Naive thymus-derived CD4-positive, alpha-beta T cell (primary cell): ENCODE measurements at regions of chr14 and their contacts with region 1.

Region 1: DNA sequence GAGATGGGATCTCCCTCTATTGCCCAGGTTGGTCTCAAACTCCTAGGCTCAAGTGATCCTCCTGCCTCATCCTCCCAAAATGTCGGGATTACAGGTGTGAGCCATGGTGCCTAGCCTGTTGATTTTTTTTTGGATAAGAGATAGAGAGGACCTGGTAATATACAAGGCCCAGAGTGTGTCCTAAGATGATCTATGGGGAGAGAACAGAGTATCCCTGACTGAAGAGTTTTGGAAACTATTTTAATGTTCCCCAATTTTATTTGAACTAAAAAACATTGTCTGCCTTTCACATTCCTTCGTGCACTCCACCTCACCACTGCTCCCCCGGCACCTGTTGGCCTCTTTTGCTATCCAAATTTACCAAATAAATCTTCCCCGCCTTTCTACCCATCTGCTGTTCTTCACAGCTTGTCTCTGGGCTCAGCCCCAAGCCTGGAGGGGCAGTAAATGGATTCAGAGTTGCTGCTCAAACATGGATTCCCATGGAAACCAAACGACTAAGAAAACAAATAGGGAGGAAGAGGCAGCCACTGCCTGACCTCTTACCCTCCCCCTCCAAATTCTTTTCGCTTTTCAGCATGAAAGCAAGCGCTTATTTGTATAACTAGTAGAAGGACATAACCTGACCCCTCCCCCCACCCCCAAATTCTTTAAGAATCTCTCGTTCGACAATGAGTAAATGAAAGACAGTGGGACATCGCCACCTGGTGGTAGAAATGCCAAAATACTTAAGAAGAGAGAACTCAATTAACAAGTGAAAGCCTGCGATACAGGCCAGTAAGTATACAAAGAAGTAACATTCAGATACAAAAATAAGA is 22.6 kb downstream of the OR10G3 start:
- DNase-seq: peak; percentile 25 to 81 (median 74)
- ATAC-seq: peak; percentile 84
- H3K4me3 ChIP-seq: peak overlapping the region; percentile 27
- H3K4me3 Mint-ChIP-seq: peak overlapping the region in 9 of 10 donors; percentile 14 to 71 (median 46)
- H3K27ac ChIP-seq: peak overlapping the region; percentile 24
- H3K27ac Mint-ChIP-seq: peak overlapping the region in 8 of 9 donors; percentile 6 to 92 (median 64)
- H3K4me1 ChIP-seq: peaks cover 0 to 4% of the 10 kb centered on the region in 2 donors
- H3K4me1 Mint-ChIP-seq: peaks cover 2 to 12% (median 7%) of the 10 kb centered on the region in 7 donors
- H3K27me3 ChIP-seq: no peaks in the 10 kb centered on the region
- H3K27me3 Mint-ChIP-seq: peaks cover 0 to 2% (median 0%) of the 10 kb centered on the region in 5 donors

Region 2: DNA sequence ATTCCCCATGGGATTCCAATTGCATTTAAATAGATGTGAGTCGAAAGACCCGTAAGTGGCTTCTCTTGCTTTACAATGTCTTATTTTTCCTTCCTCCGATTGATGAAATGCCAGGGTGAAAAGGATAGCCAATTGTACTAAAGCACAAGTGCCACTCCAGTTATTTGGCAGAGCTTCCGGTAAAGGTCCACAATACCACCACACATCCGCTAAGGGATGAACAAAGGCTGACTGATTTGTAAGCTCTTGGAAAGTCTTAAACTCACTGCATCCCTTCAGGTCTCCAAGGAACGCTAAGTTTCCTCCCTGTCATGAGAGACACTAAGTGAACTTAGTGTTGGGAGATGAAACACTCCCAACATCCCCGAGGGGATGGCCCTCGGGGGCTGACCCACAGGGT is 733.4 kb before region 1 on chr14:
- CTCF ChIA-PET with region 1: no interaction called
- POLR2A ChIA-PET with region 1: no interaction called
- intact Hi-C with region 1: no loop called
- DNase-seq: no peak
- ATAC-seq: no peak
- H3K4me3 ChIP-seq: no peak overlapping the region
- H3K4me3 Mint-ChIP-seq: no peak overlapping the region
- H3K27ac ChIP-seq: no peak overlapping the region
- H3K27ac Mint-ChIP-seq: no peak overlapping the region
- H3K4me1 ChIP-seq: no peaks in the 10 kb centered on the region
- H3K4me1 Mint-ChIP-seq: peaks cover 0 to 6% (median 0%) of the 10 kb centered on the region in 7 donors
- H3K27me3 ChIP-seq: no peaks in the 10 kb centered on the region
- H3K27me3 Mint-ChIP-seq: peaks cover 0 to 14% (median 4%) of the 10 kb centered on the region in 5 donors

Region 3: DNA sequence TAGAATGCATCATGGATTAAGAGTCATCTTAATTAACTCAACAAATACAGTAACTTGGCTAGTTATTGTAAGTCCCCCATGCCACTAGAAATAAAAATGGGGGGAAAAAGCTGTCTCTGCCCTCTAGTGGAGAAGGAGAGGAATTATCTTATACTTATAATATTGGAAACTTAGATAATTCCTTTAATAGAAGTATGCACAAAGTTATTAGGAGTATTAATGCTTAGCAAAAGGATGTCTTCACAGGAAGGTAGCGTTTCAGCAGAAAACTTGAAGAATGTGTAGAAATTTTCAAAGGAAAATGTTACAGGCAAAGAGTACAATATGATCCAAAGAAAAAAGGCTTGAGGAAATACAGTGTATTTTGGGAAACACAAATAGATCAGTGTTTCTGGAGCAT is 421.3 kb before region 1 on chr14:
- CTCF ChIA-PET with region 1: no interaction called
- POLR2A ChIA-PET with region 1: no interaction called
- intact Hi-C with region 1: loop called in 1 of 2 experiments (anchors 1 kb)
- DNase-seq: peak in 5 of 9 donors; percentile 1 to 22 (median 14)
- ATAC-seq: no peak
- H3K4me3 ChIP-seq: no peak overlapping the region
- H3K4me3 Mint-ChIP-seq: no peak overlapping the region
- H3K27ac ChIP-seq: no peak overlapping the region
- H3K27ac Mint-ChIP-seq: no peak overlapping the region
- H3K4me1 ChIP-seq: no peaks in the 10 kb centered on the region
- H3K4me1 Mint-ChIP-seq: no peaks in the 10 kb centered on the region
- H3K27me3 ChIP-seq: no peaks in the 10 kb centered on the region
- H3K27me3 Mint-ChIP-seq: peaks cover 0 to 8% (median 0%) of the 10 kb centered on the region in 5 donors

Region 4: GRCh38 chr14:21383848-21384493 is 173.3 kb before region 1 on chr14 and contains the start of gene SUPT16H:
- CTCF ChIA-PET with region 1: no interaction called
- POLR2A ChIA-PET with region 1: no interaction called
- intact Hi-C with region 1: loop called in 1 of 2 experiments (anchors 1 kb)
- DNase-seq: peak; percentile 78 to 91 (median 86)
- ATAC-seq: peak; percentile 97
- H3K4me3 ChIP-seq: peak within 1 kb of the TSS; percentile 98
- H3K4me3 Mint-ChIP-seq: peak within 1 kb of the TSS; percentile 92 to 99 (median 97)
- H3K27ac ChIP-seq: peak within 1 kb of the TSS; percentile 87
- H3K27ac Mint-ChIP-seq: peak within 1 kb of the TSS; percentile 97 to 100 (median 99)
- H3K4me1 ChIP-seq: peaks cover 3 to 11% of the 10 kb centered on the region in 2 donors
- H3K4me1 Mint-ChIP-seq: peaks cover 26 to 52% (median 45%) of the 10 kb centered on the region in 7 donors
- H3K27me3 ChIP-seq: no peaks in the 10 kb centered on the region
- H3K27me3 Mint-ChIP-seq: no peaks in the 10 kb centered on the region
- total RNA-seq, gene SUPT16H: 46.1 to 104 (median 78.6) TPM

Region 5: GRCh38 chr14:21476925-21477681 is 80.2 kb before region 1 on chr14 and contains the starts of genes RAB2B and TOX4:
- CTCF ChIA-PET with region 1: no interaction called
- POLR2A ChIA-PET with region 1: no interaction called
- intact Hi-C with region 1: loop called (anchors 1 kb)
- DNase-seq: peak; percentile 83 to 98 (median 97)
- ATAC-seq: peak; percentile 99
- H3K4me3 ChIP-seq: peak within 1 kb of the TSS; percentile 99
- H3K4me3 Mint-ChIP-seq: peak within 1 kb of the TSS; percentile 96 to 100 (median 99)
- H3K27ac ChIP-seq: peak within 1 kb of the TSS; percentile 88
- H3K27ac Mint-ChIP-seq: peak within 1 kb of the TSS; percentile 93 to 100 (median 98)
- H3K4me1 ChIP-seq: peaks cover 21 to 22% of the 10 kb centered on the region in 2 donors
- H3K4me1 Mint-ChIP-seq: peaks cover 18 to 74% (median 58%) of the 10 kb centered on the region in 7 donors
- H3K27me3 ChIP-seq: no peaks in the 10 kb centered on the region
- H3K27me3 Mint-ChIP-seq: no peaks in the 10 kb centered on the region
- total RNA-seq, gene RAB2B: 26.6 to 32.8 (median 30.5) TPM
- total RNA-seq, gene TOX4: 78.5 to 116 (median 86.5) TPM

Region 6: DNA sequence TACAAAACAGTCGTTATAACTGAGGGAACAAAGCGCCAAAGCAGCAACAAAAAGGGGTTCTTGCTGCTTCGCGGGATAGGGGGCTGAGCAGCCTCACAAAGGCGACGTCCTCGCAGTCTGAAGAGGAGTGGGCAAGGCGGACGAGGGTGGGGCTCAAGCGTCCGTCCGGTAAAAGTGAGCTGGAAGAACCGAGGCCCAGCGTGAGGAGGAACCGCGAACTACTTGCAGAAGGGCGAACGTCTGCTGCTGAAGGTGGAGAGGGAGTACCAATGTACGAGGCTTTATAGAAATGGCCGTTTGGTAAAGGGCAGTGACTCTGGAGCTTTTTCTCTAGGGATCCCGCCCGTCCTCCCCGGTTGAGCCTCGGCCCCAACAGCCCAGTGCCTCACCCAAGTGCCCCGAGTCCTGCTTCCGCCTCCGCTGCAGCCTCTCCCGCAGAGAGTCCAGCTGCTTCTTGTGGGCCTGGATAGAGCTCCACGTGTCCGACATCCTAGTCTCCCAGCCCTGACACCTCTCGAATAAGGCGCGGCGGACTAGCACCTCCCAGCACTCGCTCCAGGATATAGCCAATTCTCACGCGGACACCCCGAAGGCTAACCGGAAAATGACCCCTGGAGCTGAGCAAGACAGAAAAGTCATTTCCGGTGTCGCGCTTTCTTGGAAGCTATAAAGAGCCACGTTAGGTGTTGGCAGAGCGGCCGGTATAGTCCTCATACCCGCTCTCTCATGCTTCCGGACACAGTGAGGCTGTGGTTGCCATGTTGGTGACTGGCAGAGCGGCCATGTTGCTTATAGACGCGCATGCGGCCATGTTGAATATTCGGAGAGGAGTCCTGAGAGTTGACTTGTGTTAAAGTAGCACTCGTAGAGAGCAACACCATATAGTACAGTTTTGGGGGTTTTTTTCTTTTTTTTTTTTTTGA is 46.3 kb before region 1 on chr14 and contains the start of gene METTL3:
- CTCF ChIA-PET with region 1: interaction called, 6 read pairs
- POLR2A ChIA-PET with region 1: no interaction called
- intact Hi-C with region 1: loop called in 1 of 2 experiments (anchors 1 kb)
- DNase-seq: peak; percentile 78 to 95 (median 90)
- ATAC-seq: peak; percentile 100
- H3K4me3 ChIP-seq: peak within 1 kb of the TSS; percentile 94
- H3K4me3 Mint-ChIP-seq: peak within 1 kb of the TSS; percentile 92 to 100 (median 99)
- H3K27ac ChIP-seq: peak within 1 kb of the TSS; percentile 87
- H3K27ac Mint-ChIP-seq: peak within 1 kb of the TSS; percentile 97 to 99 (median 98)
- H3K4me1 ChIP-seq: peaks cover 15 to 21% of the 10 kb centered on the region in 2 donors
- H3K4me1 Mint-ChIP-seq: peaks cover 20 to 47% (median 42%) of the 10 kb centered on the region in 7 donors
- H3K27me3 ChIP-seq: no peaks in the 10 kb centered on the region
- H3K27me3 Mint-ChIP-seq: peaks cover 0 to 1% (median 0%) of the 10 kb centered on the region in 5 donors
- total RNA-seq, gene METTL3: 43.6 to 108 (median 75.3) TPM